ENCODE measurements at regions of chr14 and their contacts with region 1.

Region 1: DNA sequence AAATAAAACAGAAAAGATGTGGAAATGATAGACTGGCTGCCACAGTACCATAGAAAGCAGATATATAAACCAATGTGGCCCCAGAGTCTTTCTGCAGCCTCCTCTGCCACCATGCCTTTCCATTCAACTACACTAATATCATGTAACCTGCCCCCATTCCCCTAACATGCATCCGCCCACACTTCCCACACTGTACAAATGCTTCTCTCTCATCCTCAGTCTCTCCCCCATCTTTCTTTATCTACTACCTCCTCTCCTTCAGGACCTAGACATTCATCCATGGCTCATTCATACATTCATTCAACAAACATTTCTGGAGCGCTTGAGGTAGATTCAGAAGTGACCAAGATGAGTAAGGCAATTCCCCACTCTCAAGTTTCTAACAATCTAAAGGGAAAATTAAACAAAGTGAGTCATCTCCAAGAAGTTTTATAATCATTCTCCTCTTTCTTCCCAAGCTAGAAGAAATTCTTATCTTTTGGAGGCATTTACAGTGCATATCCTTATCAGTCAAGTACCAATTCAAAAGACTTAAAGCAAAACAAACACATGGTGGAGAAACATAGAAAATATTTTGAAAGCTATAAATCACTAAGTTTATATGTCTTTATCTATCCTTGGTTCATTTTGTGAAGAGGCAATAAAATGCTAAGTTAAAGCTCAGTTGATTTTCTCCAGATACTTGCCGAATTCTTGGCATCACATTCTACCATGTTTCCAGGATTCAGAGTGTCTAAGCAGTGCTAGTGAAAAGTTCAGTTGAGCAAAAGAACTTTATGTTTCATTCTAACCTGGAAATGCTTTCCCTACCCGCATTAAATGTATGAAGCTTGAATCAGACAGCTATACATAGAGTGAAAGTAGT is 70.5 kb upstream of the FRMD6 start:
- DNase-seq: peak; percentile 92
- ATAC-seq: peak; percentile 84
- H3K4me3 ChIP-seq: peak overlapping the region; percentile 1; the same call in 1 of the 2 replicates
- H3K27ac ChIP-seq: peak overlapping the region; percentile 82
- H3K4me1 ChIP-seq: peaks cover 60% of the 10 kb centered on the region
- H3K27me3 ChIP-seq: no peaks in the 10 kb centered on the region
- CTCF ChIP-seq: no peak

Region 2: DNA sequence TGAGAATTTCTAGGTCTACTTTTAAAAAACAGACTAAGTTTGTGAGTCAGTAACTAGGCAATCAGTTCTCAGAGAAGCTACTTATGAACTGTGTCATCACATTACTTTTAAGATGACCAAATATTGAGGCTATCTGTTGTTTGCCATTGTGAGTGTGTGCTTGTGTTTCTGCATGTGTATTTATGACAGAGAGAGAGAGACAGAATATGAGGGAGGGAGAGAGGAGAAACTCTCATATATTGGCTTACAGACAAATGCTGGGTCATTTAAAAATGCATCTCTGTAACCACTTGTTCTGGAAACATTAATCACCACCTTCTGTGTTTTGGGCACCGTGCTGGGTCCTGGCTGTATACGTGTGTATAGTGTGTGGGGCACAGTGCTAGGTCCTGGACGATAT is 91.0 kb before region 1 on chr14:
- CTCF ChIA-PET with region 1: no interaction called
- POLR2A ChIA-PET with region 1: no interaction called
- intact Hi-C with region 1: no loop called
- DNase-seq: peak; percentile 66
- ATAC-seq: peak; percentile 84
- H3K4me3 ChIP-seq: no peak overlapping the region
- H3K27ac ChIP-seq: peak overlapping the region; percentile 73
- H3K4me1 ChIP-seq: peaks cover 23% of the 10 kb centered on the region
- H3K27me3 ChIP-seq: no peaks in the 10 kb centered on the region
- CTCF ChIP-seq: no peak

Region 3: GRCh38 chr14:51554953-51555352 is 26.3 kb before region 1 on chr14:
- CTCF ChIA-PET with region 1: interaction called, 3 read pairs
- POLR2A ChIA-PET with region 1: no interaction called
- intact Hi-C with region 1: loop called (anchors 1 kb)
- DNase-seq: peak; percentile 67
- ATAC-seq: peak; percentile 50
- H3K4me3 ChIP-seq: peak overlapping the region; percentile 47
- H3K27ac ChIP-seq: peak overlapping the region; percentile 72
- H3K4me1 ChIP-seq: peaks cover 47% of the 10 kb centered on the region
- H3K27me3 ChIP-seq: no peaks in the 10 kb centered on the region
- CTCF ChIP-seq: peak; percentile 67

Region 4: GRCh38 chr14:51638071-51638944 is 57.1 kb after region 1 on chr14:
- CTCF ChIA-PET with region 1: no interaction called
- POLR2A ChIA-PET with region 1: no interaction called
- intact Hi-C with region 1: loop called (anchors 5 kb)
- DNase-seq: no peak
- ATAC-seq: peak; percentile 17; the same call in 1 of the 2 replicates
- H3K4me3 ChIP-seq: no peak overlapping the region
- H3K27ac ChIP-seq: no peak overlapping the region
- H3K4me1 ChIP-seq: peaks cover 6% of the 10 kb centered on the region
- H3K27me3 ChIP-seq: no peaks in the 10 kb centered on the region
- CTCF ChIP-seq: no peak